Sigmoid colon (tissue), 7 donors: ENCODE measurements at regions of chr4 and their contacts with region 1.

Region 1: DNA sequence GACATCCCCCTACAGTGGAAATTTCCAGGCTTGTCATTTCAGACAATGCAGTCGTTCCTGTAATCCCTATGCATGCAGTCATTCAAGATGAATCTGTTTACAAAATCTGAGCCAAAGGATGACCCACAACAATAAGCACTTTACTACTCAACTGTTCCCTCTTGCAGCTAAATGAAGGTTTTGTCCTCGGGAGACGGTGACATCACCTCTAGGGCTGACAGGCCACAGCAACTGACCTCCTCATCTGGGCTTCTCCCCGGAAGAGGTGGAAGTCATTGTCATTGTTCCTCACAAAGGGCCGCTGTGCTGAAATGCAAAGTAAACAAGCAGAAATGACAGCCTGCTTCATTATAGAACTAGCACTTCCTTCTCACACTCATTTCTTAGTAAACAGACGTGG is 29.2 kb downstream of the CLRN2 start:
- DNase-seq: no peak
- H3K4me3 ChIP-seq: no peak overlapping the region
- H3K27ac ChIP-seq: no peak overlapping the region
- H3K4me1 ChIP-seq: no peaks in the 10 kb centered on the region
- H3K27me3 ChIP-seq: no peaks in the 10 kb centered on the region
- CTCF ChIP-seq: no peak
- EP300 ChIP-seq: no peak
- POLR2A ChIP-seq: no peak

Region 2: GRCh38 chr4:17614416-17615299 is 70.5 kb after region 1 on chr4 and contains the start of gene MED28:
- intact Hi-C with region 1: loop called (anchors 1 kb)
- DNase-seq: peak; percentile 99
- H3K4me3 ChIP-seq: peak within 1 kb of the TSS; percentile 60 to 96 (median 88)
- H3K27ac ChIP-seq: peak within 1 kb of the TSS; percentile 79 to 90 (median 86)
- H3K4me1 ChIP-seq: peaks cover 0 to 49% (median 41%) of the 10 kb centered on the region in 4 donors
- H3K27me3 ChIP-seq: no peaks in the 10 kb centered on the region
- CTCF ChIP-seq: peak in 2 of 4 experiments; percentile 20 to 30
- EP300 ChIP-seq: no peak
- POLR2A ChIP-seq: peak; percentile 94
- total RNA-seq, gene MED28: 17.1 to 24.0 (median 18.7) TPM

Region 3: GRCh38 chr4:17636696-17637622 is 92.8 kb after region 1 on chr4:
- intact Hi-C with region 1: loop called (anchors 1 kb)
- DNase-seq: peak; percentile 84
- H3K4me3 ChIP-seq: no peak overlapping the region
- H3K27ac ChIP-seq: no peak overlapping the region
- H3K4me1 ChIP-seq: peaks cover 0 to 3% (median 1%) of the 10 kb centered on the region in 4 donors
- H3K27me3 ChIP-seq: peaks cover 0 to 2% (median 0%) of the 10 kb centered on the region in 3 donors
- CTCF ChIP-seq: peak; percentile 55 to 91 (median 66)
- EP300 ChIP-seq: no peak
- POLR2A ChIP-seq: no peak

Region 4: GRCh38 chr4:18593445-18594002 is 1049.3 kb after region 1 on chr4:
- intact Hi-C with region 1: loop called (anchors 5 kb)
- DNase-seq: peak; percentile 71
- H3K4me3 ChIP-seq: no peak overlapping the region
- H3K27ac ChIP-seq: no peak overlapping the region
- H3K4me1 ChIP-seq: peaks cover 0 to 7% (median 4%) of the 10 kb centered on the region in 4 donors
- H3K27me3 ChIP-seq: no peaks in the 10 kb centered on the region
- CTCF ChIP-seq: peak; percentile 39 to 75 (median 60)
- EP300 ChIP-seq: no peak
- POLR2A ChIP-seq: no peak